Heart right ventricle (tissue), 16 donors: ENCODE measurements at regions of chr9 and their contacts with region 1.

Region 1: DNA sequence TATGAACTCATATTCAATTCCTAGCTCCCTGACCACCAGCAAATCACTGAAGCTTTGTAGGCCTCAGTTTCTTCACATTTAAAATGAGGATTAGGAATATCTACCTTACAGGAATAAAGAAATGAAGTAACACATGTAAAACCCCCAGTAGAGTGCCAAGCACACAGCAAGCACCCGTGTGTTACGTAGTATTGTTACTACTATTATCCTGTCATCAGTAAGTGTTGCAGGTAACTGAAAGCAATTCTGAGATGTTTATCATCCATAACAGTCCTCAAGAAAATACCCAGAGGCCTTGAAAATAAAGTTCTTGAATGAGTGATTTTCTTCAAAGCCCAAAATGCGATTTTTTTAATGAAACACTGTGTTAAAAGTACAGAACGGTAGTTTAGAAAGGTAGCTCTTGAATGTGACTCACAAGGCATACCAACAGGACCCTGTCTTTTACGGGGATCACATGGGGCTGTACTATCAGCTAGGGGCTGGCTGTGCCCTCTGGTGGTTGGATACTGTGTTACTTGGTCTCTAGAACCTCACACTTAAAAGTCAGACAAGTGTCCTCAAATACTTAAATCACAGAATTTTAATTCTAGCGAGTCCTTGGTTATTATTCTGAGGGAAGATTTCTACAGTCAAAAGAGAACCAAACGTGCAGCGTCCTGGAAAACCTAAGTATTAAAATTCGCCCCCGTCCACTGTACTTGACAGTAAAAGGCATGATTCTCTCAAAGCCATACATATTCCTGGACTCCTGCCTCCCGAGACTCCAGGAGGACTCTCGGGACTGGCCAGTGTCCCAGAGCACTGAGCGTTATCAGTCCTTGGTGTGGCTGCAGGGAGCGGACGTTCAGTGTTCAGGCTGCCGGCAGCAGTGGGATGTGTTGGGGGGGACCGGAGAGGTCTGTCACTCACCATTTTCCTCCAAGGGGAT is 725 bp downstream of the NDUFB6 start:
- DNase-seq: peak; percentile 39 to 57
- ATAC-seq: peak; percentile 63 to 94 (median 88)
- H3K4me3 ChIP-seq: peak overlapping the region; percentile 58 to 92 (median 88)
- H3K27ac ChIP-seq: peak overlapping the region; percentile 85 to 94 (median 92)
- H3K4me1 ChIP-seq: peaks cover 0 to 31% (median 21%) of the 10 kb centered on the region in 9 donors
- H3K27me3 ChIP-seq: no peaks in the 10 kb centered on the region
- CTCF ChIP-seq: peak in 8 of 9 donors; percentile 19 to 67 (median 56)

Region 2: GRCh38 chr9:32378993-32379729 is 193.1 kb before region 1 on chr9:
- intact Hi-C with region 1: loop called in 4 of 10 experiments (anchors 1 to 5 kb)
- DNase-seq: peak in 1 of 2 donors; percentile 47
- ATAC-seq: peak; percentile 72 to 91 (median 82)
- H3K4me3 ChIP-seq: no peak overlapping the region
- H3K27ac ChIP-seq: no peak overlapping the region
- H3K4me1 ChIP-seq: peaks cover 0 to 19% (median 6%) of the 10 kb centered on the region in 9 donors
- H3K27me3 ChIP-seq: peaks cover 0 to 13% (median 0%) of the 10 kb centered on the region in 7 donors
- CTCF ChIP-seq: peak; percentile 62 to 92 (median 81)

Region 3: GRCh38 chr9:32431940-32432555 is 140.2 kb before region 1 on chr9:
- intact Hi-C with region 1: loop called in 1 of 10 experiments (anchors 10 kb)
- DNase-seq: peak; percentile 23 to 28
- ATAC-seq: peak in 6 of 8 donors; percentile 55 to 71 (median 63)
- H3K4me3 ChIP-seq: no peak overlapping the region
- H3K27ac ChIP-seq: no peak overlapping the region
- H3K4me1 ChIP-seq: peaks cover 0 to 3% (median 0%) of the 10 kb centered on the region in 9 donors
- H3K27me3 ChIP-seq: no peaks in the 10 kb centered on the region
- CTCF ChIP-seq: peak; percentile 8 to 70 (median 58)

Region 4: DNA sequence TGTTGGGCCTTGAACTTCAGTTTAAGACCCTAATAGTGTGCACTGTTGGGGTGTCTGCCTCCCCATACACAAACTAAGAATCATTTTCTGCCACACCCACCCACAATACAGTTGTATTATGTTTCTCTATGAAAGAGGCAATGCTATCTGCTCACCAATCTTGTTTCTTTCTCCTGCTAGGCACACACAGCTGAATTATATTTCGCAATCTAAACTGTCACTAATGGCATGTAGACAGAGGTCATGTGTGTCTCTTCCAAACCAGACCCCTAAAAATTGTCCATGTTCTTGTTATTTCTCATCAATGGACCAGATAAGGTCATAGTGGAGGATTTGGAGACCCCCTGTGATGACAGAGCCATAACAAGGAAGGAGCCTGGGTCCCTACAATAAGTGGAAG is 103.5 kb before region 1 on chr9:
- intact Hi-C with region 1: loop called in 1 of 10 experiments (anchors 10 kb)
- DNase-seq: no peak
- ATAC-seq: no peak
- H3K4me3 ChIP-seq: no peak overlapping the region
- H3K27ac ChIP-seq: no peak overlapping the region
- H3K4me1 ChIP-seq: no peaks in the 10 kb centered on the region
- H3K27me3 ChIP-seq: no peaks in the 10 kb centered on the region
- CTCF ChIP-seq: no peak

Region 5: GRCh38 chr9:32526041-32526706 is 46.1 kb before region 1 on chr9 and contains the start of gene RIGI:
- intact Hi-C with region 1: loop called in 2 of 10 experiments (anchors 10 kb)
- DNase-seq: peak; percentile 91 to 96
- ATAC-seq: peak; percentile 94 to 97 (median 96)
- H3K4me3 ChIP-seq: peak within 1 kb of the TSS; percentile 39 to 91 (median 68)
- H3K27ac ChIP-seq: peak within 1 kb of the TSS; percentile 41 to 92 (median 84)
- H3K4me1 ChIP-seq: peaks cover 4 to 41% (median 33%) of the 10 kb centered on the region in 9 donors
- H3K27me3 ChIP-seq: no peaks in the 10 kb centered on the region
- CTCF ChIP-seq: peak in 8 of 9 donors; percentile 39 to 72 (median 54)
- total RNA-seq, gene RIGI: 3.0 to 15.2 (median 5.0) TPM

Region 6: DNA sequence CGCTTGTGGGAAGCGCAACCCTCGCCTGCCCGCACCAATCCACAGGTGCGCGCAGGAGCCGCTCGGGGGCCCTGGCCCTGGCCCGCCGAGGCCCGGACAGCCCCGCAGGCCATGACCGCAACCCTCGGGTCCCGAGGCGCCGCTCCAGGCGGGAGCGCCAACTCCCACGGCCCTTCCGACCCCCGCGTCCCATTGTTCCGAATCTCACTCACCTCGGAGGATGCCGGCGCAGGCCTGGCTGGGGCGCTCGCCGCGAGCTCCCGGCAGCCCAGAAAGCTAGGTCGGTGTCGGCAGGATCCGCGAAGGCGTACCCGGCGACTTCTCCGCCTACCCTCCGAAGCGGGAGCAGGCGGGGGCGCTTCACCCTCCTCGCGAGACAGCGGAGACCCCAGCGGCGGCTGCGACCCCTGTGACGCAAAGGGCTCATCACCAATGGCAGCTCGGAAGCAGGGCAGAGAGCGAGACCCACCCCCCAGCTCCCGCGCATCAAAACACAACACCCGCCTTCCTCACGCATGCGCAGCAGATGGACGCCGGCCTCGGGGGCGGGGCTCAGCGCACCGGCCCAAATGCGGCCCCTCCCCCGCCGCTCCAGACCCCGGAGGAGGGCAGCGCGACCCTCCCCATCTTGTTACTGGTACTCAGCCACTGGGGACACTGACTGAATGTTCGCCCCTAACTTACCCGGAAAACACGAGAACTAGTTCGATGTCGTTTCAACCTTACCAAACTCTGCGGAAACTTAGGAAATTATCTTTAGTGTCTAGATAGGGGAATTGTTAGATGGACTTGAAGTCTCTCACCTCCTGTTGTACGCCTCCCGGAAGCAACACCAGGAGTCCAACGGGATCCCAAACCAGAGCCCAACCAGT is 21.4 kb before region 1 on chr9:
- intact Hi-C with region 1: loop called in 3 of 10 experiments (anchors 1 to 2 kb)
- DNase-seq: peak; percentile 93 to 94
- ATAC-seq: peak; percentile 88 to 95 (median 91)
- H3K4me3 ChIP-seq: peak overlapping the region; percentile 55 to 96 (median 82)
- H3K27ac ChIP-seq: peak overlapping the region; percentile 90 to 98 (median 96)
- H3K4me1 ChIP-seq: peaks cover 0 to 44% (median 25%) of the 10 kb centered on the region in 9 donors
- H3K27me3 ChIP-seq: no peaks in the 10 kb centered on the region
- CTCF ChIP-seq: peak in 2 of 9 donors; percentile 34 to 40

Region 7: GRCh38 chr9:32677931-32678330 is 105.7 kb after region 1 on chr9:
- intact Hi-C with region 1: no loop called
- DNase-seq: no peak
- ATAC-seq: no peak
- H3K4me3 ChIP-seq: no peak overlapping the region
- H3K27ac ChIP-seq: no peak overlapping the region
- H3K4me1 ChIP-seq: no peaks in the 10 kb centered on the region
- H3K27me3 ChIP-seq: no peaks in the 10 kb centered on the region
- CTCF ChIP-seq: no peak